A673 (cell line): ENCODE measurements at regions of chr9 and their contacts with region 1.

Region 1: GRCh38 chr9:133112663-133113026 is 8.4 kb downstream of the RALGDS start:
- DNase-seq: no peak
- H3K4me3 ChIP-seq: no peak overlapping the region
- H3K27ac ChIP-seq: no peak overlapping the region
- H3K4me1 ChIP-seq: peaks cover 28% of the 10 kb centered on the region
- H3K27me3 ChIP-seq: no peaks in the 10 kb centered on the region
- CTCF ChIP-seq: no peak

Region 2: DNA sequence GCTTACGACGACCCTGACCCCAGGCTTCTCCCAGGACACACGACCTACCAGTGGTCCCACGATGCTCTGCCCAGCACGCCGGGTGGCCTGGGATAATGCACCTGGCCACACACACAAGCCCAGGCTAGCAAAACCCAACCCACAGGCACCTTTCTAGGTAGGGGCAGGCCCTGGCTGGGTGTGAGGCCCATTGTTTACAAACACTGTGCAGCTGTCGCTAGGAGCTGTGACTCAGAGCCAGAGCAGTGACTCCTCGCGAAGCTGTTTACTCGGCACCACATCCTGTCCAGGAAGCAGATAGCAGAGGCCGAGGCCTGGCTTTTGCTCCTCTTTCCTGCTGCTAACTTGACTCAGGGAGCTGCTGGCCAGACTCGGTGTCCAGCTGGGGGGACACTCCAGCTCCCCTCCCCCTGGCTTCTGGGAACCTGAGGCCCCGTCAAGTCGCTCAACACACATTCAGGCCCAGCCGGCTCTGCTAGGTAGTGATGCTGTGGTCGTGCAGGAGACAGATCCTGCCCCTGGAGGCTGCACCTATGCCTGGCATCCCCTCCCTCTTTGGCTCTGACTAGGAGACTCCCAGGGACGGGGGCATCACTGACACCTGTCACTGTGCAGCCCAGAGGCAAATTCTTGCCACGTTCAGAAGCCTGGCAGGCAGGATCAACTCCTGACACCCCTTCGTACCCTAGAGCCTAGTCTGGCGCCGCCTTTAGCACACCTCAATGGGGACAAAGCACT is 21.2 kb after region 1 on chr9:
- CTCF ChIA-PET with region 1: no interaction called
- POLR2A ChIA-PET with region 1: no interaction called
- intact Hi-C with region 1: no loop called
- DNase-seq: no peak
- H3K4me3 ChIP-seq: no peak overlapping the region
- H3K27ac ChIP-seq: no peak overlapping the region
- H3K4me1 ChIP-seq: peaks cover 5% of the 10 kb centered on the region
- H3K27me3 ChIP-seq: no peaks in the 10 kb centered on the region
- CTCF ChIP-seq: no peak

Region 3: DNA sequence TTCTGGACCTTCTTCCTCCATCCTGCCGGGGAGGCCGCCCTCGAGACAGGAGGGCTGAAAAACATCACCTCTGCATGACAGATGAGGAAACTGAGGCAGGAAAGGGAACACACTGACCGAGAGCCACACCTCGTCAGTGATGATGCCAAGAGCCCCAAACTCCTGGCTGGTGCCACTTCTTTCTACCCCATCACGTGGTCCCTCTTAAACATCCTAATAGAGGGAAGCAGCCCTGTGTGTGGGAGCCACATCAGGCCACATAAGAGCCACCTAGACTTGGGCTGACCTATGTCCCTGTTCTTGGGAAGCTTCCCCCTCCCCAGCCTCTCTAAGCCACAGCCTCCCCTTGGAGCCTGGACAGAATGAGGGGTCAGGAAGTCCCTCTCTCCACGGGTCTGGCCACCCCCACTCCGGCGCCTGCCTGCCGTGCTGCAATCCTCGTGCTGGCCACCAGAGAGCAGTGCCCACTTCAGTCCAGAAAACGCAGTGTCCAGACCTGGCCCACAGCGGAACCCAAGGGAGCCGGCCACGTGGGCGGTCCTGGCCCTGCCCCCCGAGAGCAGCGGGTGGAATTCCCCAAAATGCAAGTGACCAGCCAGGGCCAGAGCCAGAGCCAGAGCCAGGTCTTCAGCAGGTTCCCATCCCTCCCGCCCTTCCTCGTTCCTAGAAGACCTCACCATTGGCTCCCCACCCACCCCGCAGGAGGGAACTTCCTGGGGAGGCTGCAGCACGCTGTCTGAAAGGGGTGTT is 680.3 kb after region 1 on chr9:
- CTCF ChIA-PET with region 1: no interaction called
- POLR2A ChIA-PET with region 1: interaction called, 16 read pairs
- intact Hi-C with region 1: no loop called
- DNase-seq: peak; percentile 57
- H3K4me3 ChIP-seq: no peak overlapping the region
- H3K27ac ChIP-seq: no peak overlapping the region
- H3K4me1 ChIP-seq: peaks cover 23% of the 10 kb centered on the region
- H3K27me3 ChIP-seq: no peaks in the 10 kb centered on the region
- CTCF ChIP-seq: peak; percentile 90